Left ventricle myocardium inferior (tissue), 1 donor: ENCODE measurements at regions of chr4 and their contacts with region 1.

Region 1: GRCh38 chr4:143202824-143203223 is 18.1 kb downstream of the USP38 start:
- DNase-seq: no peak
- H3K4me3 ChIP-seq: no peak overlapping the region
- H3K27ac ChIP-seq: no peak overlapping the region
- H3K4me1 ChIP-seq: peaks cover 7% of the 10 kb centered on the region
- H3K27me3 ChIP-seq: no peaks in the 10 kb centered on the region
- CTCF ChIP-seq: peak; percentile 50

Region 2: DNA sequence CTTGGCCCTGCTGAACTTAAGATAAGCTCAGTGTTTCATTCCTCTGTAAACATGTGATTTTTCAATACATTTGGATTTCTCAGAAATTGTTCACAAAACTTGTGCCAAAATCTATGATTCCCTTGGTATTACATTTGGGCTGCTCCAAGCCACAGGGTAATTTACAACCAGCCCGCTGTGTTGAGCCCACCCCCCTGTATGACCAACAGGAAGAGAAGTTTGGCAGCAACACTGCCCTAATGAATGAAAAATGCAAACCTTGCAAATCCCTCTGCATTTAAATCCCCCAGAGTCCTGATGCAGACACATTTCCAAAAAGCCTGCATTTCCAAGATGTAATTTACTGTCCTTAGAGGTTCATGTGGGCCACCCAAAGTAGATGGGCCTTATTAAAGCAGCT is 99.7 kb after region 1 on chr4:
- intact Hi-C with region 1: no loop called
- DNase-seq: no peak
- H3K4me3 ChIP-seq: no peak overlapping the region
- H3K27ac ChIP-seq: no peak overlapping the region
- H3K4me1 ChIP-seq: peaks cover 14% of the 10 kb centered on the region
- H3K27me3 ChIP-seq: no peaks in the 10 kb centered on the region
- CTCF ChIP-seq: no peak

Region 3: DNA sequence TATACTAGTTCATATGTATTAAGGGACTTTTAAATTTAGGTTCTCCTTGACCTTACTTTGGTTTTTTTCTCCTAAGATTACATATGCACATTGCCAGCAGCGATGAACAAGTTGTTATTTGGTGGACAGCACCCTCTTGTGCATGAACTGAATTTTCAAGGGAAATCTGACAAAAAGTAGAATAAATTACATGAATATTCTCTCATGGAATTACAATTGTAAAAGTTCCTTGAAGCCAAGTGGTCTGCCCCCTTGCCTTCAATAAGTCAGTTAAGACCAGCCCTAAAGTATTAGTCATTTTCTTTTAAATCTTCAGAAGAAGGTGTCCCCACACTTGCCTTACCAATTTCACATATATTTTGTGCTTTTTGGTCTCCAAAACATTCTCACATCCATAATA is 280.0 kb after region 1 on chr4:
- intact Hi-C with region 1: loop called (anchors 5 kb)
- DNase-seq: no peak
- H3K4me3 ChIP-seq: no peak overlapping the region
- H3K27ac ChIP-seq: no peak overlapping the region
- H3K4me1 ChIP-seq: peaks cover 4% of the 10 kb centered on the region
- H3K27me3 ChIP-seq: no peaks in the 10 kb centered on the region
- CTCF ChIP-seq: peak; percentile 77